ENCODE measurements at regions of chr12 and their contacts with region 1.

Region 1: DNA sequence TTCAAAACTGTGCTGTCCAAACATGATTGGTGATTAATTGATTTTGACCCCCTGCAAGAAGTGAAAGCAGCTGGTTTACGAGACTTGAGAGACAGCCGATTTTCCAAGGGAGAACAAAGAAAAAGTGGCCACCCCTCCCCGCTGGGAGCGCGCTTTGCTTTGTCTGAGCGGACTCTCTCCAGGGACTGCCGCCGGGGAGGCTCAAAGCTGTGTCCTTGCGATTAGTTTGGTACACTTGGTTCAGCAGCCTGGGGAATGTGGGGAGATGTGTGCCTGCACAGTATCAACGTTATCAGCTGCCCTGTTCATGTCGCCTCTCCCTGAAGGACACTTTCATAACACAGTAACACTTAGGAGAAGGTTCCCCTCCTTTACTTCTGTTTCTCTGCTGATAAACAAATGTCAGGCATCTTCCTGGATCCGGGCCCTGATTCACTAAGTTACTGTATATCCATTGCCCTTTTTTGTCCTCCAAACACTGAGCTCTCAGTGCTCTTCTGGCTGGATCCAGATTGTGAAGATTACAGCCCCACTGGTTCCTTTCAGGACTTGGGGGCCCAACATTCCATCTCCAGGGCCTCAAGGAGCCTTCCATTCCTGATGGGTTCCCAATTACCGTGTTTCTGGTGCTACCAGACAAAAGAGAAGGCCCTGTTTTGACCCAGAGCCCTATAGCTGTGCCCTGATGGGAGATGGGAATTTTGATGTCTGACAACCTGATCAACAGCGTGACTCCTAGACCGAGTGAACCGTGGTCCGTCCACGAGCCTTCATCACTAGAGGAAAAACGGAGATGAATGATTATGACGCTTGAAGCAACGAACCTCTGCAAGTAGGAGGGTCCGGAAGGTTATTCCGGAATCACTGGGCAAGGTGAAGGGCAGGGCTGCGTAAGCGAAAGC is 31.7 kb upstream of the TUBA1C start:
- DNase-seq: peak; percentile 23 to 47 (median 40)
- H3K4me3 ChIP-seq: peak overlapping the region; percentile 14 to 80 (median 32)
- H3K4me3 Mint-ChIP-seq: peak overlapping the region; percentile 87 to 90
- H3K27ac ChIP-seq: peak overlapping the region; percentile 90 to 99
- H3K27ac Mint-ChIP-seq: peak overlapping the region; percentile 99 to 100 (median 100)
- H3K4me1 ChIP-seq: peaks cover 47 to 63% of the 10 kb centered on the region in 2 donors
- H3K4me1 Mint-ChIP-seq: peaks cover 44% of the 10 kb centered on the region
- H3K27me3 ChIP-seq: no peaks in the 10 kb centered on the region
- H3K27me3 Mint-ChIP-seq: peaks cover 0 to 3% (median 2%) of the 10 kb centered on the region in 3 donors
- CTCF ChIP-seq: no peak

Region 2: DNA sequence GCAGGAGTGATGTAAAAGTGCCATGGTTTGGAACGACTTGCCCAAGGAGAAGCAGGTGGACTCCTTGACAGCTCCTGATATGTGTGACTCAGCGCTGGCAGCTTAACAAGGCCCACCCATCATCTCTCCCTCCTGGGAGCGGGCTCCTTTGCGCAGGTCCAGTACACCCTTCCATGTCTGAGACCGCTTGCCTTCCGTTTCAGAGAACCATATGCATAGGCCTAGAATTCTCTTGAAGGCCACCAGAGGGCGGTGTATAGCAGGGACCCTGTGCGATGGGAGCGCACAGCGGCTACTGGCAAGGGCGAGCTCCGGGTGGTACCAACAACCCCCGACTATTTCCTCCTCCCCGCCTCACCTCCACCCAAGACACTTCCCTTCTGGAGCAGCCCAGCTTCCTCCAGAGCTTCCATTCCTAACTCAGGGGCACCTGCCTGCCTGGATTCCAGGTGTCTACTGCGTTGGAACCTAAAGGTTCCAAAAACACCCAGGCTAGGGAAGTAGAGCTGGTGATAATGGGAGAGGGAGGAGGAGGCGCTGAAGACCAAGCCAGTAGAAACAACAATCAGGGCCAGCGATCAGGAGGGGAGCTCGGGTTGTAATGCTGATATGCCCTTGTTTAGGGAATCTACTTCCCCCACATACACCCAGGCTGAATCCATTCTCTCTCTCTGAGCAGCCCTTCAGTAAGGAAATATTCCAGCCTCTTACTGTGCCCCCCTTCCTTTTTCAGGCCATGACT is 144.8 kb before region 1 on chr12:
- intact Hi-C with region 1: loop called (anchors 2 to 5 kb)
- DNase-seq: peak; percentile 67 to 77 (median 71)
- H3K4me3 ChIP-seq: peak overlapping the region in 1 of 3 experiments; percentile 50
- H3K4me3 Mint-ChIP-seq: peak overlapping the region; percentile 47 to 83
- H3K27ac ChIP-seq: no peak overlapping the region
- H3K27ac Mint-ChIP-seq: peak overlapping the region in 1 of 7 donors; percentile 20
- H3K4me1 ChIP-seq: peaks cover 39 to 42% of the 10 kb centered on the region in 2 donors
- H3K4me1 Mint-ChIP-seq: peaks cover 39% of the 10 kb centered on the region
- H3K27me3 ChIP-seq: peaks cover 50 to 65% of the 10 kb centered on the region in 2 donors
- H3K27me3 Mint-ChIP-seq: peaks cover 61 to 75% (median 61%) of the 10 kb centered on the region in 3 donors
- CTCF ChIP-seq: peak; percentile 93

Region 3: GRCh38 chr12:49130151-49131050 is 102.8 kb before region 1 on chr12:
- intact Hi-C with region 1: loop called (anchors 5 to 10 kb)
- DNase-seq: peak; percentile 94 to 96 (median 96)
- H3K4me3 ChIP-seq: peak overlapping the region; percentile 84 to 99 (median 98)
- H3K4me3 Mint-ChIP-seq: peak overlapping the region; percentile 94 to 97
- H3K27ac ChIP-seq: peak overlapping the region; percentile 94 to 97
- H3K27ac Mint-ChIP-seq: peak overlapping the region; percentile 94 to 96 (median 96)
- H3K4me1 ChIP-seq: peaks cover 27 to 43% of the 10 kb centered on the region in 2 donors
- H3K4me1 Mint-ChIP-seq: peaks cover 38% of the 10 kb centered on the region
- H3K27me3 ChIP-seq: no peaks in the 10 kb centered on the region
- H3K27me3 Mint-ChIP-seq: no peaks in the 10 kb centered on the region
- CTCF ChIP-seq: peak; percentile 98

Region 4: GRCh38 chr12:49160399-49160798 is 72.8 kb before region 1 on chr12:
- intact Hi-C with region 1: no loop called
- DNase-seq: no peak
- H3K4me3 ChIP-seq: peak overlapping the region in 1 of 3 experiments; percentile 51
- H3K4me3 Mint-ChIP-seq: peak overlapping the region in 1 of 2 donors; percentile 30
- H3K27ac ChIP-seq: peak overlapping the region; percentile 68 to 83
- H3K27ac Mint-ChIP-seq: peak overlapping the region; percentile 86 to 98 (median 96)
- H3K4me1 ChIP-seq: peaks cover 31 to 37% of the 10 kb centered on the region in 2 donors
- H3K4me1 Mint-ChIP-seq: peaks cover 37% of the 10 kb centered on the region
- H3K27me3 ChIP-seq: no peaks in the 10 kb centered on the region
- H3K27me3 Mint-ChIP-seq: peaks cover 0 to 2% (median 0%) of the 10 kb centered on the region in 3 donors
- CTCF ChIP-seq: no peak

Region 5: GRCh38 chr12:49188914-49189367 is 44.2 kb before region 1 on chr12 and contains the start of gene TUBA1A:
- intact Hi-C with region 1: loop called (anchors 2 to 5 kb)
- DNase-seq: peak; percentile 91 to 94 (median 92)
- H3K4me3 ChIP-seq: peak within 1 kb of the TSS; percentile 57 to 99 (median 72)
- H3K4me3 Mint-ChIP-seq: peak within 1 kb of the TSS; percentile 96 to 97
- H3K27ac ChIP-seq: peak within 1 kb of the TSS; percentile 85
- H3K27ac Mint-ChIP-seq: peak within 1 kb of the TSS; percentile 94 to 99 (median 97)
- H3K4me1 ChIP-seq: peaks cover 21 to 31% of the 10 kb centered on the region in 2 donors
- H3K4me1 Mint-ChIP-seq: peaks cover 31% of the 10 kb centered on the region
- H3K27me3 ChIP-seq: no peaks in the 10 kb centered on the region
- H3K27me3 Mint-ChIP-seq: peaks cover 2 to 3% (median 2%) of the 10 kb centered on the region in 3 donors
- CTCF ChIP-seq: no peak
- polyA plus RNA-seq, gene TUBA1A: 859 to 1,779 (median 946) TPM

Measured in CD14-positive monocyte (primary cell).